Vagina (tissue), 2 donors: ENCODE measurements at regions of chr2 and their contacts with region 1.

Region 1: GRCh38 chr2:226791487-226792081 is 8.0 kb downstream of the IRS1 start:
- DNase-seq: peak in 1 of 2 donors; percentile 90
- H3K4me3 ChIP-seq: peak overlapping the region; percentile 61 to 65
- H3K27ac ChIP-seq: peak overlapping the region; percentile 95
- H3K4me1 ChIP-seq: peaks cover 64% of the 10 kb centered on the region
- H3K27me3 ChIP-seq: no peaks in the 10 kb centered on the region
- CTCF ChIP-seq: peak in 2 of 3 experiments; percentile 31 to 54
- POLR2A ChIP-seq: peak in 1 of 2 donors; percentile 55

Region 2: GRCh38 chr2:225894240-225894980 is 897.2 kb before region 1 on chr2:
- intact Hi-C with region 1: loop called (anchors 10 kb)
- DNase-seq: no peak
- H3K4me3 ChIP-seq: no peak overlapping the region
- H3K27ac ChIP-seq: no peak overlapping the region
- H3K4me1 ChIP-seq: no peaks in the 10 kb centered on the region
- H3K27me3 ChIP-seq: no peaks in the 10 kb centered on the region
- CTCF ChIP-seq: no peak
- POLR2A ChIP-seq: no peak

Region 3: DNA sequence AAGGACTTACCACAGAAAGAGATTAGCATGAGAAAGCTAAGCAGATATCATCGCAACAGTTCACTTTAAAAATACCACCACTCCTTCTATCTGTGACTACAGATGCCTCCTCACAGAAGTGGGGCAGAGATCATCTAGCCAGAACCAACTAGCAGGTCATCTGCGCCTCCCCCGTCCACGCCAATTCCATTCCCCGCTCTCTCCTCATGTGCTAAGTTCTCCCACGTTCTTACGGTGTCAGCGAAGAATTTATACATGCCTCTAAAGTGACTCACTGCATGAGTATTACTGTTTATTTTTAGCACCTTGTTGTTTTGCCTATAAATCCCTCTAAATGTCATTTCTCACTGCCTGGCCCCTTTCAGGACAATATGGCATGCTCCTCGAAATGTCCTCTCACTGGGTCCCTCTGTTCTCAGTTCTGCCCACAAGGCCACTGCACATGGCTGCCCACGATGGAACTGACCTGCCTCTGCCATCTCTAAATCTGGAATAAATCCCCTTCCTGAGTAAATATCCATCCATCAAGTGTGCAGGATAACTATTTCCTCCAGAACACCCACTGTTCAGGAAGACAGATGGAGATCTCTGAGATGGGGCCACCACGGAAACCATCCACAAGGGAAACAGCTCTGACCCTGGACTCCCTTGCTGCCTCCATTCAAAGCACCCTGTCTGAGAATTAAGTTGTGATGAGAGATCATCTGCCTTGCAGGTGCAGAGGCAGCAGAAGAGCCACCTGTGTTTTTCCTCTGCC is 129.6 kb before region 1 on chr2:
- intact Hi-C with region 1: loop called (anchors 10 kb)
- DNase-seq: no peak
- H3K4me3 ChIP-seq: no peak overlapping the region
- H3K27ac ChIP-seq: peak overlapping the region; percentile 69
- H3K4me1 ChIP-seq: peaks cover 23% of the 10 kb centered on the region
- H3K27me3 ChIP-seq: no peaks in the 10 kb centered on the region
- CTCF ChIP-seq: no peak
- POLR2A ChIP-seq: no peak

Region 4: GRCh38 chr2:226742347-226742746 is 49.2 kb before region 1 on chr2:
- intact Hi-C with region 1: loop called (anchors 10 kb)
- DNase-seq: no peak
- H3K4me3 ChIP-seq: no peak overlapping the region
- H3K27ac ChIP-seq: peak overlapping the region; percentile 37
- H3K4me1 ChIP-seq: peaks cover 55% of the 10 kb centered on the region
- H3K27me3 ChIP-seq: no peaks in the 10 kb centered on the region
- CTCF ChIP-seq: no peak
- POLR2A ChIP-seq: no peak

Region 5: GRCh38 chr2:227179988-227180685 is 388.6 kb after region 1 on chr2:
- intact Hi-C with region 1: no loop called
- DNase-seq: no peak
- H3K4me3 ChIP-seq: no peak overlapping the region
- H3K27ac ChIP-seq: no peak overlapping the region
- H3K4me1 ChIP-seq: peaks cover 7% of the 10 kb centered on the region
- H3K27me3 ChIP-seq: no peaks in the 10 kb centered on the region
- CTCF ChIP-seq: no peak
- POLR2A ChIP-seq: no peak